ENCODE measurements at regions of chr4 and their contacts with region 1.

Region 1: DNA sequence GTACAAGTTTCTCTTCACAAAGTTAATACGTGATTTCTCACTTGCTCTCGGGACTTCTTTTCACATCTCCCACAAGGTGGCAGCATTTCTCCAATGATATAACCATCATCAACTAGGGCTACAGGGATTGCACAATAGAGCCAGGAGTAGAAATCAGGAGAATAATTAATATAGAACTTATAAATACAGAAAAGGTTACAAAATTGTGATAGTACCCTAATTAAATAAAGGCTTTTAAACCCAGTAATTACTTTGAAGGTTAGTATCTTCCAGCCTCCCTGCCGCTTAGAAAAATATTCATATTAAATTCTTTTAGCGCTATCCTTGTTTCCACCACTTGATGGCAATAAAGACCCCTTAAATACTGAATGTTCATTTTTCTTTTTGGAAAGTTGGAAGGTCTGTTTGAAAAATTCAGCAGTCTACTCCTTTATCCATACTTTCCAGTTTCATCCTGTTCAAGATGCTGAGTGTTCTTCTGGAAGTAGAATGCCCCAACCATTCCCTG is 65.8 kb downstream of the RASGEF1B start:
- DNase-seq: peak in 1 of 2 donors; percentile 87
- ATAC-seq: peak; percentile 78 to 90 (median 85)
- H3K4me3 ChIP-seq: no peak overlapping the region
- H3K4me3 Mint-ChIP-seq: no peak overlapping the region
- H3K27ac ChIP-seq: no peak overlapping the region
- H3K27ac Mint-ChIP-seq: no peak overlapping the region
- H3K4me1 ChIP-seq: no peaks in the 10 kb centered on the region
- H3K4me1 Mint-ChIP-seq: no peaks in the 10 kb centered on the region
- H3K27me3 ChIP-seq: no peaks in the 10 kb centered on the region
- H3K27me3 Mint-ChIP-seq: peaks cover 0 to 8% of the 10 kb centered on the region in 2 donors
- CTCF ChIP-seq: peak; percentile 97

Region 2: DNA sequence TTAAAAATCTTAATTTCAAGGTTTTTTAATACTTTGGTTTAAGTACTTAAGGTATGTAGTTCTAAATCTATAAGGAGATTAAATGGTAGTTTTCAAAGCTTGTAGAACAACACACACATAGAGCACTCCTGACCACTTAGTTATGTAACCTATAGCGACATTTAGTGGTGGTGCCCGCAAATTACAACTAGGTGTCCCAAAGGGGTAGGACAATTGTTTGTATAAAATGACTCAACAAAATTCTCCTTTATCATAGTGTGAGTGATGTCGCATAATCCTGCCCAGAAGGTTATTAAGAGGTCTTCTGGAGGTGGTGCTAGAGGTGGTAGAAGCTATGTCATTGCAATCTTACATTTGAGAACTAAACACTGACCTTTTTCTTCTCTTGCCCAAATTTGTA is 438.8 kb after region 1 on chr4:
- intact Hi-C with region 1: loop called (anchors 1 kb)
- DNase-seq: peak; percentile 57 to 83
- ATAC-seq: peak; percentile 92 to 99 (median 97)
- H3K4me3 ChIP-seq: no peak overlapping the region
- H3K4me3 Mint-ChIP-seq: no peak overlapping the region
- H3K27ac ChIP-seq: no peak overlapping the region
- H3K27ac Mint-ChIP-seq: no peak overlapping the region
- H3K4me1 ChIP-seq: no peaks in the 10 kb centered on the region
- H3K4me1 Mint-ChIP-seq: no peaks in the 10 kb centered on the region
- H3K27me3 ChIP-seq: no peaks in the 10 kb centered on the region
- H3K27me3 Mint-ChIP-seq: peaks cover 7 to 23% of the 10 kb centered on the region in 2 donors
- CTCF ChIP-seq: peak; percentile 85

Region 3: GRCh38 chr4:81930506-81931238 is 524.7 kb after region 1 on chr4:
- intact Hi-C with region 1: no loop called
- DNase-seq: no peak
- ATAC-seq: no peak
- H3K4me3 ChIP-seq: no peak overlapping the region
- H3K4me3 Mint-ChIP-seq: no peak overlapping the region
- H3K27ac ChIP-seq: no peak overlapping the region
- H3K27ac Mint-ChIP-seq: no peak overlapping the region
- H3K4me1 ChIP-seq: no peaks in the 10 kb centered on the region
- H3K4me1 Mint-ChIP-seq: no peaks in the 10 kb centered on the region
- H3K27me3 ChIP-seq: no peaks in the 10 kb centered on the region
- H3K27me3 Mint-ChIP-seq: peaks cover 0 to 4% of the 10 kb centered on the region in 2 donors
- CTCF ChIP-seq: no peak

Region 4: GRCh38 chr4:82201805-82202641 is 796.1 kb after region 1 on chr4:
- intact Hi-C with region 1: loop called (anchors 1 kb)
- DNase-seq: peak in 1 of 2 donors; percentile 71
- ATAC-seq: peak in 2 of 3 donors; percentile 44 to 61
- H3K4me3 ChIP-seq: no peak overlapping the region
- H3K4me3 Mint-ChIP-seq: no peak overlapping the region
- H3K27ac ChIP-seq: no peak overlapping the region
- H3K27ac Mint-ChIP-seq: no peak overlapping the region
- H3K4me1 ChIP-seq: no peaks in the 10 kb centered on the region
- H3K4me1 Mint-ChIP-seq: no peaks in the 10 kb centered on the region
- H3K27me3 ChIP-seq: no peaks in the 10 kb centered on the region
- H3K27me3 Mint-ChIP-seq: peaks cover 18 to 40% of the 10 kb centered on the region in 2 donors
- CTCF ChIP-seq: peak; percentile 52

Region 5: DNA sequence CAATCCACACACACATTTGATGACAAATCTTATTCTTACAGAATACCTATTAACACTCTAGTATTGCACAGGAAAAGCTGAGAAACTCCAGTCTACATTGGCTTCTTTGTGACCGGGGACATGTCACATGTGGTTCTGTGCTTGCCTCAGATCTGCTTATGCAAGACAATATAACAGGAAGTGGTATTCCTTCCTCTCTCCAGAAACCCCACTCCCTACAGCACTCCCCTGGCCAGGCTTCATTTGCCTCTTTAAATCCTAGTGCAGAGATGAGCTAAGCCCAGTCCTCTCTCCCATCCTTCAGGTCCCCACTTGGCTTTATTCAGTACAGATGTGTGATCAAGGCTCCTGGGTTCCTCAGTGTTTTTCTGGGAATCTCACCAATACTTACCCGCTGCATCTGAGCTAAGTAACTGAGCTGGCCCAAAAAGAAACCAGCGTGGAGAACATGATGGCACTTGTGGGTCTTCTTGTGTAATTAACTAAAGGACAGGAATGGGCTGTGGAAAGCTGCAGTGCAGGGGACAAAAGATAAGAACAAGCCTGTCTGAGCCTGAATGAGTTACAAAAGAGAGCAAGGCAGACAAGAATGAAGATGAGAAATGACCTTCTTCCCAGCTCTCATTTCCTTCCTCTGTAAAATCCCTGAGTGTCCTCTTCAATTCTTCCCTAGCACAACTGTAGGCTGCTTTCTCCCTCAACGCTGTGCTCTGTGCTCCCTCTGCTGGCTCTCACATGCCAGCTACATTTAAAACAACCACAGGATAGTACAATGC is 862.3 kb after region 1 on chr4:
- intact Hi-C with region 1: loop called (anchors 1 kb)
- DNase-seq: peak in 1 of 2 donors; percentile 75
- ATAC-seq: peak; percentile 86 to 97 (median 90)
- H3K4me3 ChIP-seq: no peak overlapping the region
- H3K4me3 Mint-ChIP-seq: no peak overlapping the region
- H3K27ac ChIP-seq: no peak overlapping the region
- H3K27ac Mint-ChIP-seq: peak overlapping the region in 1 of 2 donors; percentile 61
- H3K4me1 ChIP-seq: peaks cover 12% of the 10 kb centered on the region
- H3K4me1 Mint-ChIP-seq: peaks cover 6 to 20% of the 10 kb centered on the region in 2 donors
- H3K27me3 ChIP-seq: no peaks in the 10 kb centered on the region
- H3K27me3 Mint-ChIP-seq: no peaks in the 10 kb centered on the region
- CTCF ChIP-seq: peak; percentile 66

Region 6: DNA sequence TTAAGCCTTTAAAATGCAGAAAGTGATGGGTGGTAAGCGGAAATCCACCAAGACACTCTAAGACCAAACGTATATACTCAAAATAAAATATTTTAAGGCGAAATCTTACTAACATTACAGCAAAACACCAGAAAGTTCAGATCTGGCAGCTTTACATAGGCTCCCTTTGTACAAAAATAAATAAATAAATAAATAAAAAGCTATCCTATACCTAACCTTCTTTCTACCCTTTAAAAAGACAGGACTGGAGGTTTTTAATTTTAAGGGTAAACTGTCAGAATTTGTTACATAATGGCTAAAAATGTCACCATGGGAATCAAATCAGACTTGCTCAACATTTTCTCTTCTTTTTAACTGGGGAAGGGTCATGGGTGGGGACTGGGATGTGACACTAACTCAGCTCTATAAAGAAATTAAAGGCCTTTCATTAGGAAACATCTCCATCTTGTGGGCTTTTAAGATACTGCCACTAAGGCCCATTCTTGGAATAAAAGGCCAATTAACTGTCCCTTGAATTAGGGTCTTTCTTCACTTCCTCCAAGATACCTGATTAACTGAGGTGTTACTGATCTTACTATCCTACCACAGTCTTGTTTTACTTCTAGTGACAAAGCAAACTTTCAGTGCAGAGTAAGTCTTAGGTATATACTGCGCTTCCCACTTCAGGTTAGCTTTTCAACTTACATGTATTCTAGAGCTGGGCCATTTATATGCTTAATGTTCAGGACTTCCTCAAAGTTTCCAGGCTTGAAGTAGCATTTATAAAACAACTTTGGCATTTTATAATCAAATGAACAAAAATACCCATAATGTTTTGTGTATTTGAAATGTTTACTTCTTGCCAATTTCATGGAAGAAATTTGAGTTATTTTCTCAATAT is 954.6 kb after region 1 on chr4:
- intact Hi-C with region 1: loop called (anchors 10 kb)
- DNase-seq: peak in 1 of 2 donors; percentile 61
- ATAC-seq: peak; percentile 67 to 84 (median 75)
- H3K4me3 ChIP-seq: no peak overlapping the region
- H3K4me3 Mint-ChIP-seq: peak overlapping the region; percentile 41
- H3K27ac ChIP-seq: peak overlapping the region; percentile 21
- H3K27ac Mint-ChIP-seq: peak overlapping the region; percentile 73 to 77
- H3K4me1 ChIP-seq: peaks cover 22% of the 10 kb centered on the region
- H3K4me1 Mint-ChIP-seq: peaks cover 82 to 89% of the 10 kb centered on the region in 2 donors
- H3K27me3 ChIP-seq: no peaks in the 10 kb centered on the region
- H3K27me3 Mint-ChIP-seq: no peaks in the 10 kb centered on the region
- CTCF ChIP-seq: peak; percentile 74